B cell (primary cell): ENCODE measurements at regions of chr12 and their contacts with region 1.

Region 1: GRCh38 chr12:56117778-56118687 is at the start of gene ZC3H10:
- DNase-seq: peak; percentile 99
- ATAC-seq: peak; percentile 76
- H3K4me3 ChIP-seq: peak within 1 kb of the TSS; percentile 66 to 99 (median 97)
- H3K4me3 Mint-ChIP-seq: peak within 1 kb of the TSS; percentile 99
- H3K27ac ChIP-seq: peak within 1 kb of the TSS; percentile 94 to 95
- H3K27ac Mint-ChIP-seq: peak within 1 kb of the TSS; percentile 99
- H3K4me1 ChIP-seq: peaks cover 17 to 30% of the 10 kb centered on the region in 2 donors
- H3K4me1 Mint-ChIP-seq: peaks cover 36% of the 10 kb centered on the region
- H3K27me3 ChIP-seq: no peaks in the 10 kb centered on the region
- H3K27me3 Mint-ChIP-seq: no peaks in the 10 kb centered on the region
- CTCF ChIP-seq: peak; percentile 61
- total RNA-seq, gene ZC3H10: 21.7 and 25.5 TPM in 2 replicates

Region 2: GRCh38 chr12:55926738-55927587 is 191.1 kb before region 1 on chr12:
- CTCF ChIA-PET with region 1: no interaction called
- POLR2A ChIA-PET with region 1: no interaction called
- intact Hi-C with region 1: loop called (anchors 5 kb)
- DNase-seq: peak; percentile 94
- ATAC-seq: peak; percentile 50
- H3K4me3 ChIP-seq: peak overlapping the region; percentile 88 to 100 (median 98)
- H3K4me3 Mint-ChIP-seq: peak overlapping the region; percentile 94
- H3K27ac ChIP-seq: peak overlapping the region; percentile 67 to 92
- H3K27ac Mint-ChIP-seq: peak overlapping the region; percentile 97
- H3K4me1 ChIP-seq: peaks cover 33 to 45% of the 10 kb centered on the region in 2 donors
- H3K4me1 Mint-ChIP-seq: peaks cover 54% of the 10 kb centered on the region
- H3K27me3 ChIP-seq: no peaks in the 10 kb centered on the region
- H3K27me3 Mint-ChIP-seq: no peaks in the 10 kb centered on the region
- CTCF ChIP-seq: peak; percentile 87

Region 3: DNA sequence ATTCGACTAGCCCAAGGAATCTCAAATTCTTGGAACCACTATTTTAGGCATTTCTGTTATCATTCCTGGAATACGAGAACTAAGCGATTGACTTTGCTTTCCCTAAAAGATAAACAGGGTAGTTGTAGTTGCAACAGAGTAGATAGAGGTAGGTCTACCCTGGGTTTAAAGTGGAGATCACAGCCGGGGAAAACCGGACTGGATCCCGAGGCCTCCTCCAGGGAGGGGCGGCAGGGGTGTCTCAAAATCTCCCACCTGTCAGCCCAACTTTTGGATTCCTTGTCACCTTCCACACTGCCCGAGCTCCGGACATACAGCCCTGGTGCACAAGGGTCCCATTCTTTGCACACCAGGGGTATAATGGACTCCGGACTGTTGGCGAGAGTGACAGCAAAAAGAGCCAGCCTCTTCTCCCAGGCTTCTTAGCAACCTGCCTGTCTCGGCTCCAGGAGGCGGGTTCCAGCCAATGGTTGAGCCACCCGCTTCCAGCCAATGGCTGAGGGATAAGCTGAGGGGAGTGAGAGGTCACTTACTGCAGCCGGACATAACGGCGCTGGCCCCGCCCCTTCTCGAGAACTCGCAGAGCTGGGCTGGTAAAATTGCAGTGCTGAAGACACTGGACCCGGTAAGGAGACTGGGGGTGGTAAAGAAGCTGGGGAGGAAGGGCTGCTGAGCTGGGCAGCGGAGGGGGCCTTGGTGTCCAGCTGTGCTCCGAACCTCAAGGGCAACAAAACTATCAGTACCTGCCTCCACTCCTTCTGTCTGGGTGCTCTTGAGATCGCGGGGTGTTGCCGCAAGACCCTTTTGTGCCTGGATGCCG is 121.1 kb before region 1 on chr12 and contains the start of gene SUOX:
- CTCF ChIA-PET with region 1: no interaction called
- POLR2A ChIA-PET with region 1: no interaction called
- intact Hi-C with region 1: no loop called
- DNase-seq: peak; percentile 46
- ATAC-seq: peak; percentile 74
- H3K4me3 ChIP-seq: peak within 1 kb of the TSS; percentile 32 to 48 (median 41)
- H3K4me3 Mint-ChIP-seq: peak within 1 kb of the TSS; percentile 84
- H3K27ac ChIP-seq: no peak within 1 kb of the TSS
- H3K27ac Mint-ChIP-seq: peak within 1 kb of the TSS; percentile 71
- H3K4me1 ChIP-seq: peaks cover 13 to 18% of the 10 kb centered on the region in 2 donors
- H3K4me1 Mint-ChIP-seq: peaks cover 21% of the 10 kb centered on the region
- H3K27me3 ChIP-seq: peaks cover 0 to 4% (median 0%) of the 10 kb centered on the region in 4 experiments
- H3K27me3 Mint-ChIP-seq: no peaks in the 10 kb centered on the region
- CTCF ChIP-seq: no peak
- total RNA-seq, gene SUOX: 6.3 and 7.5 TPM in 2 replicates

Region 4: GRCh38 chr12:56104109-56104814 is 13.8 kb before region 1 on chr12 and contains the start of gene PA2G4:
- CTCF ChIA-PET with region 1: interaction called, 34 read pairs
- POLR2A ChIA-PET with region 1: interaction called, 42 read pairs
- intact Hi-C with region 1: loop called (anchors 1 kb)
- DNase-seq: peak; percentile 95
- ATAC-seq: peak; percentile 89
- H3K4me3 ChIP-seq: peak within 1 kb of the TSS; percentile 56 to 93 (median 86)
- H3K4me3 Mint-ChIP-seq: peak within 1 kb of the TSS; percentile 100
- H3K27ac ChIP-seq: peak within 1 kb of the TSS; percentile 66 to 67
- H3K27ac Mint-ChIP-seq: peak within 1 kb of the TSS; percentile 92
- H3K4me1 ChIP-seq: peaks cover 18 to 23% of the 10 kb centered on the region in 2 donors
- H3K4me1 Mint-ChIP-seq: peaks cover 38% of the 10 kb centered on the region
- H3K27me3 ChIP-seq: no peaks in the 10 kb centered on the region
- H3K27me3 Mint-ChIP-seq: no peaks in the 10 kb centered on the region
- CTCF ChIP-seq: no peak
- total RNA-seq, gene PA2G4: 77.3 and 84.6 TPM in 2 replicates

Region 5: DNA sequence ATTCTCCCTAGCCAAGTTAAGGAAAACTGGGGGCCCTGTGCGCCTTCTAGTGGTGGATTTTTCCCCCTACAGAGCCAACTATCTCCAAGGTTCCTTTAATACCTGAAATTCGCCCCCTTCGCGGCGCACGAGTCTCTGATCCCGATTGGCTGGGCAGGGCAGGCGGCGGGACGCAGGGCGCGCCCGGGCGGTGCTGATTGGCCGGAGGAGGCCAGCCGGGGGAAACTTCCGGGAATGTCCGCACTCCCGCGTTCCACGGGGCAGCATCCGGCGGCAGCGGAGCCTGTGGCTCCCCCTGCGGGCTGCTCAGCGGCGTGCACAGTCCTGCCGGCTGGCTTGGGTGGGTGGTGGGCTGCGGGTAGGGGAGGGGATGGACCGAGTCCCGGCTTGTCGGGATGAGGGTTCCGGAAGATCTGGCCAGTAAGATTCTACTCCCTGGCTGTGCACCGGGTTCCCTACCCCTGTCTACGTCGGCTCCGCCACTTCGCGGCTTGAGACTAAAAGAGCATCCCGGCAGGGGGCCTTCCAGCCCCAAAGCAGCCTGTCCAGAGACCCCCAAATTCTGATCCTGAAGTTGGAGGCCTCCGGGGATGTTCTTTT is 106.2 kb after region 1 on chr12 and contains the start of gene NABP2:
- CTCF ChIA-PET with region 1: interaction called, 27 read pairs
- POLR2A ChIA-PET with region 1: interaction called, 24 read pairs
- intact Hi-C with region 1: loop called (anchors 1 kb)
- DNase-seq: peak; percentile 94
- ATAC-seq: peak; percentile 72
- H3K4me3 ChIP-seq: peak within 1 kb of the TSS; percentile 41 to 71 (median 62)
- H3K4me3 Mint-ChIP-seq: peak within 1 kb of the TSS; percentile 100
- H3K27ac ChIP-seq: peak within 1 kb of the TSS; percentile 53 to 79
- H3K27ac Mint-ChIP-seq: peak within 1 kb of the TSS; percentile 87
- H3K4me1 ChIP-seq: peaks cover 26 to 48% of the 10 kb centered on the region in 2 donors
- H3K4me1 Mint-ChIP-seq: peaks cover 47% of the 10 kb centered on the region
- H3K27me3 ChIP-seq: no peaks in the 10 kb centered on the region
- H3K27me3 Mint-ChIP-seq: no peaks in the 10 kb centered on the region
- CTCF ChIP-seq: peak; percentile 93
- total RNA-seq, gene NABP2: 12.4 and 14.9 TPM in 2 replicates

Region 6: DNA sequence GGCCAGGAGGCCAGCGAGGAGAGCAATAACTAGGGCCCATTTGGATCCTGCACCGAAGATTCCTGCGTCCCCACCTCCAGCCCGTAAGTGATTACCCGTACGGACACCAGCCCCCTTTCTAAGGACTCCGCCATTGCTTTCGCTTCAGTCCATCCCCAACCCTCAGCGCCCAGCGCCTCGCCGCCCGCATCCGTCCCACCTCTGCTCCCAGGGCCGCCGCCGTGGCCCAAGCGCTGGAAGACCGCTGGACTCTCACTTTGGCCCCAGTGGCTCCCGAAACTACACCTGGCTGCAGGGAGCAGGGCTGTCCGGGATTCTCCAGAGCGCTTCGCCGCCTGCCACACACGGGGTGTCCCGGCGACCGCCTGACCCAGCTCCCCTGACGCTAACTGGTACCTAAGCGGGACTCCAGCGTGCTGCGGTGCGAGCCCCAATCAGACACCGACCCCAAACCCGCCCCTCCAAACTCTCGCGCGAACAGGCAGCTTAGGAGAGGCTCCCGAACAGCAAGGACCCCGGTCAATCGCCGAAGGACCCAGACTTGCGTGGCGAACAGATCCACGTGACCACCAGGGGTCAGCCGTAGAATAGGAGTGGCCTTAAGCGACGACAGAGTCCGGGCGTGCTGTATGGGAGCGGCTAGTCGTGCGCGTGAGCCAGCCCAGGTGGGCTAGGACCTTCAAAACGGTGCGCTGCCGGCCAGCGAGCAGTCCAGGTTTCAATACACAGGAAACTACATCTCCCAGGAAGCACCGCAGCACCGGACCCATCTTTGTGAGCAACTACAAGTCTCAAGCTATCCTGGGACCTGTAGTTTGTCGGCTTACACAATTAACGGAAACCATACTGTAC is 197.8 kb after region 1 on chr12 and contains the start of gene CNPY2:
- CTCF ChIA-PET with region 1: interaction called, 4 read pairs
- POLR2A ChIA-PET with region 1: interaction called, 5 read pairs
- intact Hi-C with region 1: loop called (anchors 1 kb)
- DNase-seq: peak; percentile 99
- ATAC-seq: peak; percentile 86
- H3K4me3 ChIP-seq: peak within 1 kb of the TSS; percentile 78 to 94 (median 91)
- H3K4me3 Mint-ChIP-seq: peak within 1 kb of the TSS; percentile 99
- H3K27ac ChIP-seq: peak within 1 kb of the TSS; percentile 67 to 90
- H3K27ac Mint-ChIP-seq: peak within 1 kb of the TSS; percentile 99
- H3K4me1 ChIP-seq: peaks cover 12 to 15% of the 10 kb centered on the region in 2 donors
- H3K4me1 Mint-ChIP-seq: peaks cover 10% of the 10 kb centered on the region
- H3K27me3 ChIP-seq: no peaks in the 10 kb centered on the region
- H3K27me3 Mint-ChIP-seq: no peaks in the 10 kb centered on the region
- CTCF ChIP-seq: no peak
- total RNA-seq, gene CNPY2: 89.0 and 91.2 TPM in 2 replicates

Region 7: DNA sequence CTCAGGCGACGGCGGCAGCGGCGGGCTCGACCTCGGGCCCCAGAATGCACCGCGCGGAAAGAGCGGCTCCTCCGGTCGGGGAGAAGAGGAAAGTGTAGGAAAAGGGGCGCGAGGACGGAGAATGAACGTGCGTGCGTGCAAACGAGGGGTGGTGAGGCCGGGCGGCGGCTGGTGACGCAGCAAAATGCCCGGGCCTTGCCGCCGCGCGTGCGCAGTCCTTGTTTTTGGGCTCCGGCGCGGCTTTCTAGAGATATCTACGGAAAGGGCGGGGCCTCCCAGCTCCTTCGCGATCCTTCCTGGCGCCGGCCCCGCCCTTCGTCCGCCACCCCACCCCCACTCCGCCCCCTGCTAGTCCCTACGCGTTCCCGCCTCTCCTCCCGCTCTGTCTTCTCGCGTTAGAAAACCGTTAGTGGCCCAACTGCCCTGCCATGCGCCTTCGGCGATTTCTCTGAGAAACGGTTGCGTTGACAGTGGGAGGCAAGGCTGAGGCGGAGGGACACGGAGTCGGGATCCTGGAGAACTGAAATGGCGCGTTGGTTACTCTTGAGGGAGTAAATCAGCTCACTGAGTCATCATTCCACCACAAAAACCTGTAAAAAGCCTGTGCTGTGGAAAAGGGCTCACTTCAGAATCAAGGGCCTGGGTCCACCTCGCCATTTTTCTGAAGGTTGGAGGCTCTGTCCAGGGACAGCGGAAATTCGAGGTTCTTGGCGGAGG is 570.3 kb after region 1 on chr12 and contains the start of gene PTGES3:
- CTCF ChIA-PET with region 1: no interaction called
- POLR2A ChIA-PET with region 1: no interaction called
- intact Hi-C with region 1: loop called (anchors 1 kb)
- DNase-seq: peak; percentile 99
- ATAC-seq: peak; percentile 80
- H3K4me3 ChIP-seq: peak within 1 kb of the TSS; percentile 72 to 99 (median 92)
- H3K4me3 Mint-ChIP-seq: peak within 1 kb of the TSS; percentile 97
- H3K27ac ChIP-seq: peak within 1 kb of the TSS; percentile 95
- H3K27ac Mint-ChIP-seq: peak within 1 kb of the TSS; percentile 98
- H3K4me1 ChIP-seq: peaks cover 29 to 44% of the 10 kb centered on the region in 2 donors
- H3K4me1 Mint-ChIP-seq: peaks cover 35% of the 10 kb centered on the region
- H3K27me3 ChIP-seq: no peaks in the 10 kb centered on the region
- H3K27me3 Mint-ChIP-seq: no peaks in the 10 kb centered on the region
- CTCF ChIP-seq: no peak
- total RNA-seq, gene PTGES3: 121 and 124 TPM in 2 replicates